ENCODE measurements at regions of chr5 and their contacts with region 1.

Region 1: DNA sequence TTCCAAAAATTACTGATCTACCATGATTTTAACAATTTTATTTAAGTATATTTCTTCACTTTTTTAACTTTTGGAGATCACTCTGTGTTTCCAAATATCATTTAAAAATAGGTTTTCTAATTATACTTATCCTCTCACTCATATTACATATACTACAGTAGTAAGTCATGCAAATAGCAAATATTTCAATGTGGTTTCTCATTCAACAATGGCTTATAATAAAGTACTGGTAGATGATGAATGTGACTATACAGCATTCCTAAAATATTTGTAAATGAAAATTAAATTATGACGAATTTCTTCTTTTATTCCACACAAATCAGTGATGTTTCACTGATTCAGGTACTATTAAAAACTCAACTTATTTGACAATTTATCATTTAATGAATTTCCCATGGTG is 176.3 kb upstream of the MEF2C start:
- DNase-seq: no peak
- H3K4me3 ChIP-seq: no peak overlapping the region
- H3K4me3 Mint-ChIP-seq: no peak overlapping the region
- H3K27ac Mint-ChIP-seq: no peak overlapping the region
- H3K4me1 ChIP-seq: no peaks in the 10 kb centered on the region
- H3K4me1 Mint-ChIP-seq: no peaks in the 10 kb centered on the region
- H3K27me3 ChIP-seq: no peaks in the 10 kb centered on the region
- H3K27me3 Mint-ChIP-seq: peaks cover 4% of the 10 kb centered on the region
- CTCF ChIP-seq: no peak

Region 2: DNA sequence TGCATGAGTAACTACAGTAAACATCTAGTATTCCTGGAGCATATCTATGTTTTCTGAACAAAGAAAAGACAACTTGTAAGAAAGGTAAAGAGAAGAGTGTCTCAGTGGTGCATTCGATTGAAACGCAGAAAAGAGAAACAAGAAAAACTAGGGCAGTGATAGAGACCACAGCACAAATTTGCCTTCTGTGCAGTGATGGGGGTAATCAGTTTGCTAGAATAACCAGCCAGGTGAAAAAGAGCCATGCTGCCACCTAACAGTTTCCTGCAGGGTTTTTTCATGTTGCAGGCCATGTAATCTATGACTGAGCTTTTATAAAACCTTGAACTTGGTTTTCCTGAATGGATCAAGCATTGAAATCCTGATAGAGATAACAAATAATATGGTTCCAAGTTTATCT is 22.1 kb after region 1 on chr5:
- CTCF ChIA-PET with region 1: no interaction called
- POLR2A ChIA-PET with region 1: no interaction called
- intact Hi-C with region 1: loop called (anchors 1 kb)
- DNase-seq: no peak
- H3K4me3 ChIP-seq: no peak overlapping the region
- H3K4me3 Mint-ChIP-seq: no peak overlapping the region
- H3K27ac Mint-ChIP-seq: no peak overlapping the region
- H3K4me1 ChIP-seq: no peaks in the 10 kb centered on the region
- H3K4me1 Mint-ChIP-seq: no peaks in the 10 kb centered on the region
- H3K27me3 ChIP-seq: no peaks in the 10 kb centered on the region
- H3K27me3 Mint-ChIP-seq: no peaks in the 10 kb centered on the region
- CTCF ChIP-seq: no peak

Measured in Caco-2 (cell line).